Heart left ventricle (tissue), 16 donors: ENCODE measurements at regions of chr1 and their contacts with region 1.

Region 1: DNA sequence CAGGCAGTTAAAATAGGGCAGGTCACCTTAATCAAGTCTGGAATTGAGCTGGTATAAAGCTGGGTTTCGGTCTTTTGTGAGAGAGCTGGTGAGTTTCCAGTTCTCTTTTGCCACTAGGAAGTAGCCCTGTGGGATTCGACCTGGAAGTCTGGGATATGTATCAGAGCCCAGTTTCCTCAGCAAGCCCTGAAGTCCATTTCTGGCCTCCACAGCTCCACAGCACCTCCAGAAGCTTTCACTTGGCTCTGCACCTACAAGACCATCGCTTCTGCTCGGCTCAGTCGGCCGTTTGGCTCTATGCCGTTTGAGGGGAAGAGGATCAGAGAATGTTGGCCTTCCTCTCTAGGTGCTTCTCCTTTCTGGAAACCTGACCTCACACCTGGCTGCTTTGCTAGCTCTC is 148.0 kb downstream of the GALNT2 start:
- DNase-seq: peak in 4 of 5 donors; percentile 69 to 78 (median 71)
- ATAC-seq: peak; percentile 76 to 93 (median 92)
- H3K4me3 ChIP-seq: peak overlapping the region in 2 of 12 donors; percentile 1 to 11
- H3K27ac ChIP-seq: peak overlapping the region in 11 of 12 donors; percentile 4 to 66 (median 44)
- H3K4me1 ChIP-seq: peaks cover 3 to 58% (median 31%) of the 10 kb centered on the region in 12 donors
- H3K27me3 ChIP-seq: no peaks in the 10 kb centered on the region
- CTCF ChIP-seq: peak; percentile 43 to 82 (median 72)
- POLR2A ChIP-seq: no peak

Region 2: GRCh38 chr1:229661022-229661877 is 553.8 kb before region 1 on chr1:
- intact Hi-C with region 1: loop called in 7 of 10 experiments (anchors 1 to 10 kb)
- DNase-seq: peak; percentile 78 to 89 (median 81)
- ATAC-seq: peak; percentile 80 to 95 (median 92)
- H3K4me3 ChIP-seq: no peak overlapping the region
- H3K27ac ChIP-seq: no peak overlapping the region
- H3K4me1 ChIP-seq: peaks cover 0 to 6% (median 0%) of the 10 kb centered on the region in 12 donors
- H3K27me3 ChIP-seq: no peaks in the 10 kb centered on the region
- CTCF ChIP-seq: peak; percentile 75 to 92 (median 88)
- POLR2A ChIP-seq: no peak

Region 3: DNA sequence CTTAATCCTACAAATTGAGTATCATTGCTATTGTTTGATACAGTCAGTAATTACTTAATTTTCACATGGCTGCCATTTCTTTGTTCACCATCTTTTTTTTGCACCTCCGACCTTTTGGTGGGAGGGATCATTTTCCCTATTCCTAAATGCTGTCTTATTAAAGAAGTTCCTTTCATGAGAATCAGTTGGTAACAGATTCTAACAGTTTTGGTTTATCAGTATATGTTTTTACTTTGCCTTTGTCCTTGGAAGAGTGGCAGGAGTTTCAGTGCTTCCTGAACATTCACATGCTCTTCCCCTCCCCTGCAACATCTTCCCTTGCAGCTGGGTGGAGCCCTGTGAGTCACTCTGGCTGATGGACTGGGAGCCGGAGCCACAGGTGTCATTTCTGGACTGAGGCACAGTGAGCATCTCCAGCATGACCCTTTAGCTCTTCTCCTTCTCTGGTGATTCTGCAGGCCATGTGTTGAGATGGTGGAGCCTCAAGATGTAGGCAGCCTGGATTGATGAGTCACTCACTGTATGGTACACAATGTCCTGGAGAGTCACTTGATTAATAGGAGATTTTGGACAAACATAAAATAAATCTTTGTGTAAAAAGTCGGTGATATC is 371.3 kb before region 1 on chr1:
- intact Hi-C with region 1: loop called in 3 of 10 experiments (anchors 5 to 10 kb)
- DNase-seq: peak in 3 of 5 donors; percentile 29 to 67 (median 60)
- ATAC-seq: peak; percentile 65 to 89 (median 86)
- H3K4me3 ChIP-seq: no peak overlapping the region
- H3K27ac ChIP-seq: peak overlapping the region in 1 of 12 donors; percentile 47
- H3K4me1 ChIP-seq: peaks cover 0 to 16% (median 3%) of the 10 kb centered on the region in 12 donors
- H3K27me3 ChIP-seq: no peaks in the 10 kb centered on the region
- CTCF ChIP-seq: peak in 10 of 12 donors; percentile 15 to 59 (median 40)
- POLR2A ChIP-seq: no peak

Region 4: DNA sequence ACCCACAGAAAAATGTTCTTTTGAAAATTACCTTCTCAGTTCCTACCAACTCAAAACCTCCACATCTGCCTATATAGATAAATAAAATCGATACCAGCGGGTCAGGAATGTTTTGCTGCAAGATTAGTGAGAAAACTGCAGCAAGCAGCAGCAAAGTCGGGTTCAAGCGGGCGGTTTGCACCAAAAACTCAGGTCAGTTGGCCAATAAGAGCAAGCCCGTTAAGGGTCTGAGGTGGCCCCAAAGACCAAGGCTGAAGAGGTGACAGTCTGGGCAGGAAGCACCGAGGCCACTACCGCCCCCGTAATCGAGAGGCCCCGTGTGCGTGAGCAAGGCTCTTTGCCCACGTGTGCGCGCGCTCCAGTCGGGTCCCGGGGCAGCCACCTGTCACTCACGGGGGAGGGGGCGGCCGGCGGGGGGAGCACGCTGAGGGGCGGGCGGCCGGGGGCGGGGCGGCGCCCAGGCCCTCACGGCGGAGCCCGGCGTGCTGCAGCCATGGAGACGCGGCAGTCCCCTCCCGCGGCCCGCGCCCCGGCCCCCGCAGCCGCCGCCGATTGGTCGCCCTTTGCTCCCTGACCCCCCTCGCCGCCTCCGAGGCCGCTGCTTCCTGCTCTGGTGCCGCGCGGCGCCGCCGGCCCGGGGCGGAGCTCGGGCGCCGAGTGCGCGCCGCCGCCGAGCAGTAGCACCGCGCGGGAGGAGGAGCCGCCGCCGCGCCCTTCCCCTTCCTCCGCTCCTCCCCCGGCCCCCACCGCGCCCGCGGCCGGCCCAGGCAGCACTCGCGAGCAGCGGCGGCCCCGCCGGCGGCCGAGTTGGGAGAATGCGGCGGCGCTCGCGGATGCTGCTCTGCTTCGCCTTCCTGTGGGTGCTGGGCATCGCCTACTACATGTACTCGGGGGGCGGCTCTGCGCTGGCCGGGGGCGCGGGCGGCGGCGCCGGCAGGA is 148.3 kb before region 1 on chr1 and contains the start of gene GALNT2:
- intact Hi-C with region 1: loop called in 7 of 10 experiments (anchors 2 to 10 kb)
- DNase-seq: peak; percentile 92 to 94 (median 93)
- ATAC-seq: peak; percentile 88 to 98 (median 94)
- H3K4me3 ChIP-seq: peak within 1 kb of the TSS; percentile 63 to 97 (median 84)
- H3K27ac ChIP-seq: peak within 1 kb of the TSS; percentile 79 to 92 (median 88)
- H3K4me1 ChIP-seq: peaks cover 0 to 48% (median 22%) of the 10 kb centered on the region in 12 donors
- H3K27me3 ChIP-seq: no peaks in the 10 kb centered on the region
- CTCF ChIP-seq: no peak
- POLR2A ChIP-seq: peak; percentile 57 to 80
- total RNA-seq, gene GALNT2: 21.0 to 44.9 (median 31.6) TPM

Region 5: GRCh38 chr1:230268366-230269170 is 53.5 kb after region 1 on chr1:
- intact Hi-C with region 1: loop called in 1 of 10 experiments (anchors 5 kb)
- DNase-seq: peak in 2 of 5 donors; percentile 37 to 48
- ATAC-seq: peak; percentile 45 to 79 (median 72)
- H3K4me3 ChIP-seq: no peak overlapping the region
- H3K27ac ChIP-seq: peak overlapping the region in 2 of 12 donors; percentile 32 to 48
- H3K4me1 ChIP-seq: peaks cover 0 to 32% (median 17%) of the 10 kb centered on the region in 12 donors
- H3K27me3 ChIP-seq: no peaks in the 10 kb centered on the region
- CTCF ChIP-seq: peak; percentile 37 to 71 (median 56)
- POLR2A ChIP-seq: no peak

Region 6: GRCh38 chr1:230310381-230311163 is 95.5 kb after region 1 on chr1:
- intact Hi-C with region 1: loop called in 1 of 10 experiments (anchors 5 kb)
- DNase-seq: peak; percentile 67 to 82 (median 71)
- ATAC-seq: peak; percentile 75 to 88 (median 86)
- H3K4me3 ChIP-seq: no peak overlapping the region
- H3K27ac ChIP-seq: no peak overlapping the region
- H3K4me1 ChIP-seq: peaks cover 0 to 16% (median 1%) of the 10 kb centered on the region in 12 donors
- H3K27me3 ChIP-seq: peaks cover 0 to 9% (median 0%) of the 10 kb centered on the region in 9 donors
- CTCF ChIP-seq: peak; percentile 85 to 96 (median 92)
- POLR2A ChIP-seq: no peak